ENCODE measurements at regions of chr2 and their contacts with region 1.

Region 1: DNA sequence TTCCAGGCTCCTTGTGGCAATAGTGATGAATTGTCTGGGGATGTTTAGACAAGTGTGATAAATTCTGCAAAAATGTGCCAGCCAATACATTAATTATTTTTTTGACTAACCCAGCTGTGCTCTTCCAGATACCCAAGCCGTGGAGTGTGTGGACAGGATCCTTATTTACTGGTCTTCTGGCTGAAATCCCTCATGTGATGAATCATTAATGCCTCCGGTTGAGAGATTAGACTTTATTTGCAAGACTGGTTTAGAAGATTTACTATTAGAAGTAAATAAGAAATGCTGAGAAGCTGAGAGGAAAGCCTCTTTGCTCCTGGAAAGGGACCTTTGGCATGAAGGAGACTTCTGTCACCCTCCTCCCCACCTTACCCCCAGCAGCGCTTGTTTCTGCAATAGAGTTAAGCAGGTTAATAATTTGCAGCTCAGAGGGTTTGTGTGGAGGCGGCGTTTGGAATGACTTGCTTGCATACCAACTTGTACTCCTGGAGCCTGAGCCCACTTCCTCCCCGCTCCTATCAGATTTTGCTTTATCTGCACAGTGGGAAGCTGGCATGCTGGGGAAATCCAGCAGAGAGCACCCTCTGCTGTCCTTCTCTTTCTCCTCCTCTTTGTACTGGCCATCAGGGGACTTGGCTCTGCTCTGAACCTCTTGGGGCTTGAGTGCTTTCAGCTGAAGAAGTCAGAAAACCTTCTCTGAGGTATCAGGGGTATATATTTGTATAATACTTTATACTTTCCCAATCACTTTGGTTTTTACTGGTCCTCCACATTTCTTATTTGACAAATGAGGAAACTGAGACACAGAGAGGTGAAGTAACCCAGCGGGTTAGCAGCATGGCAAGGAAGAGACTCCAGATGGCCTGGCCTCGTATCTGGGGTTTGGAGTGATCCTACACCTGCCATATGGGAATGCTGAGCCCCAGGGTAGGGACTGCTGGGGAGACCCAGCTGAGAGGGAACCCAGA is 16.3 kb downstream of the SLC3A1 start:
- DNase-seq: peak; percentile 39
- H3K4me3 ChIP-seq: no peak overlapping the region
- H3K27me3 ChIP-seq: no peaks in the 10 kb centered on the region
- CTCF ChIP-seq: peak; percentile 76

Region 2: DNA sequence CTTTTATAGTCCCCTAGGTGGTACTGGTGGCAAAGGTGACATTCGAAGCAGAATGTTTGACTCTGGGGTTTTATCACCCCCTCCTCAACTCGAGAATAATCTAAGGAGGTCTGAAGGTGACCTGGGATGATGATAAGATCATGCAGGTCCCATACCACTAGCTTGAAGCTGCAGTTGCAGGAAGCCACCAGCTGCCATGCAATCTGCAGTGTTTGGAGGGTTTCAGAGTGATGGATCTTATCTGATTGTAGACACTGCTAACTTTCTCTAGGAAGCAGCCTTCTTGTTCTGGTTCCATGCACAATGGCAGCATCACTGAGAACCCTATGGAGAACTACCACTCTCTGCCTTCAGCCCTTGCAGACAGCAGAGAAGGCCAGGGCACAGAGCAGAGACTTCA is 236.3 kb before region 1 on chr2:
- CTCF ChIA-PET with region 1: no interaction called
- POLR2A ChIA-PET with region 1: no interaction called
- DNase-seq: no peak
- H3K4me3 ChIP-seq: no peak overlapping the region
- H3K27me3 ChIP-seq: no peaks in the 10 kb centered on the region
- CTCF ChIP-seq: no peak

Region 3: GRCh38 chr2:44244129-44244871 is 47.3 kb before region 1 on chr2:
- CTCF ChIA-PET with region 1: interaction called, 13 read pairs
- POLR2A ChIA-PET with region 1: no interaction called
- DNase-seq: no peak
- H3K4me3 ChIP-seq: peak overlapping the region; percentile 27; the same call in 1 of the 2 replicates
- H3K27me3 ChIP-seq: no peaks in the 10 kb centered on the region
- CTCF ChIP-seq: peak; percentile 58